Endothelial cell of umbilical vein (primary cell): ENCODE measurements at regions of chr12 and their contacts with region 1.

Region 1: DNA sequence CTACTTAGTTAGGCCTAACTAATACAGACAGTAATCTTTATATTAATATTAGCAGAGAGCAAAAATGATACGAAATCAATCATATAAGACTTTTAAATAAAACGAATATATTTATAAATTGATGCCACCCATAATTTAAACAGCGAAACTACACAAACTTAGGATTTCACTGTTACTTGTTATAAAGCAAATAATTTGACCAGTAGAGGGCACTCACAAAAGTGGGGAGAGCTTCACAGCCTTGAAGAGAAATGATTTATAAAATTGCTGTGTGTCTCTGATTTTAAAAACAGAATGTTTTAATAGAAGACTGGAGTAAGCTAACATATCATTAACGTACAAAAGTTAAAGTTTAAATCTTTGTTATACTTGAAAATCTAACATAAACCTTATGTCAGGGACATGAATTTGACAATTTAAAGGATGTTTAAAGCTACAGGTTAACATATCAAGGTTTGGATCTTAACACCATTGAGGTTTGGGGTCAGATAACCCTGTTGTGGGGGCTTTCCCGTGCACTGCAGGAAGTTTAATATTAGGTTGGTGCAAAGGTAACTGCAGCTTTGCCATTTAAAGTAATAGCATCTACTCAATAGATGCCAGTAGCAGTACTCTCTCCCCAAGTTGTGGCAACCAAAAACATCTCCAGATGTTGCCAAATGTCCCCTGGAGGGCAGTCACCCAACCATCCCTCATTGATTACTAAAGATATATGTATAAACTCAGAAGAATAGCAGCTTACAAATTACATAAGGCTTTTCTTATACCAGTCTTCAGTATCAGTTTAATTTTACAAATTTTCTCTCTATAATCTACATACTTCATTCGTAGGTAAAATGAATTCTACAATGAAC is 9.3 kb downstream of the KRAS start:
- DNase-seq: peak; percentile 55
- H3K4me3 ChIP-seq: no peak overlapping the region
- H3K27ac ChIP-seq: no peak overlapping the region
- H3K4me1 ChIP-seq: no peaks in the 10 kb centered on the region
- H3K27me3 ChIP-seq: no peaks in the 10 kb centered on the region
- CTCF ChIP-seq: peak; percentile 29 to 33
- POLR2A ChIP-seq: no peak

Region 2: GRCh38 chr12:25041006-25041741 is 200.2 kb before region 1 on chr12:
- CTCF ChIA-PET with region 1: no interaction called
- POLR2A ChIA-PET with region 1: no interaction called
- dilution Hi-C with region 1: no loop called
- intact Hi-C with region 1: no loop called
- DNase-seq: no peak
- H3K4me3 ChIP-seq: no peak overlapping the region
- H3K27ac ChIP-seq: no peak overlapping the region
- H3K4me1 ChIP-seq: no peaks in the 10 kb centered on the region
- H3K27me3 ChIP-seq: peaks cover 4 to 6% of the 10 kb centered on the region in 2 experiments
- CTCF ChIP-seq: no peak
- POLR2A ChIP-seq: no peak

Region 3: GRCh38 chr12:25107920-25108319 is 133.5 kb before region 1 on chr12:
- CTCF ChIA-PET with region 1: no interaction called
- POLR2A ChIA-PET with region 1: interaction called, 10 read pairs
- dilution Hi-C with region 1: no loop called
- intact Hi-C with region 1: no loop called
- DNase-seq: no peak
- H3K4me3 ChIP-seq: no peak overlapping the region
- H3K27ac ChIP-seq: no peak overlapping the region
- H3K4me1 ChIP-seq: no peaks in the 10 kb centered on the region
- H3K27me3 ChIP-seq: no peaks in the 10 kb centered on the region
- CTCF ChIP-seq: no peak
- POLR2A ChIP-seq: no peak

Region 4: DNA sequence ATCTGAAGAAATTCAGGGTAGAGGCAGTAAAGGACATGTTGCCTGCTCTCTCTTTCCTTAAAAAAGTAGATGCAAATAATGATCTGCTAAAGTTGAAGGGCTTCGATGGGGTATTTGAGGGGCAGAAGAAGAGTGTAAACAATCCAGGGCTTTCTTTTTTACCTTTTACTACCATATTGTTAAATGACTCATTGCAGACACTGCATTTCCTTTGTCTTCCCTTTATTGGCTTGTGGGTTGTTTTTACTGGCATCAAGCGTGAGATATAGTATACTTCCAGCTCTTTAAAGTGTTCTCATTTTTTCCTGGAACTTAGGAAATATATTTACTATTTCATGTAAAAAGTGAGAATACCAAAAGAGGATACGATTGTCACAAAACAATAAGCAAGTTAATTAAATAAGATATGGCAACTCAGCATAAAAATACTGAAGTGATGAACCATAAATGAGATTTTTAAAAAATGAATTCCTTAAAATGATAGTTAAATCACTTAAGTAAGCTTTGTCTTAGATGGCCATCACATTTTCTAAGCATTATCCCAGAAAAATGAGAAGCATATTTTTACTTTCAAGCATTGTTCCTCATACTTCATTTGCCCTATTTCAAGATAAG is 81.6 kb after region 1 on chr12:
- CTCF ChIA-PET with region 1: interaction called, 11 read pairs
- POLR2A ChIA-PET with region 1: no interaction called
- dilution Hi-C with region 1: no loop called
- intact Hi-C with region 1: no loop called
- DNase-seq: peak; percentile 80
- H3K4me3 ChIP-seq: no peak overlapping the region
- H3K27ac ChIP-seq: no peak overlapping the region
- H3K4me1 ChIP-seq: peaks cover 14% of the 10 kb centered on the region
- H3K27me3 ChIP-seq: peaks cover 5 to 9% of the 10 kb centered on the region in 2 experiments
- CTCF ChIP-seq: no peak
- POLR2A ChIP-seq: no peak

Region 5: GRCh38 chr12:25377469-25378177 is 136.2 kb after region 1 on chr12:
- CTCF ChIA-PET with region 1: interaction called, 13 read pairs
- POLR2A ChIA-PET with region 1: no interaction called
- dilution Hi-C with region 1: no loop called
- intact Hi-C with region 1: no loop called
- DNase-seq: no peak
- H3K4me3 ChIP-seq: no peak overlapping the region
- H3K27ac ChIP-seq: no peak overlapping the region
- H3K4me1 ChIP-seq: no peaks in the 10 kb centered on the region
- H3K27me3 ChIP-seq: peaks cover 6 to 13% of the 10 kb centered on the region in 2 experiments
- CTCF ChIP-seq: no peak
- POLR2A ChIP-seq: no peak